CD14-positive monocyte (primary cell): ENCODE measurements at regions of chr22 and their contacts with region 1.

Region 1: GRCh38 chr22:42959576-42960509 is 55.1 kb downstream of the PACSIN2 start:
- DNase-seq: peak; percentile 40 to 69 (median 55)
- H3K4me3 ChIP-seq: peak overlapping the region in 2 of 3 experiments; percentile 27 to 68
- H3K4me3 Mint-ChIP-seq: peak overlapping the region; percentile 63 to 81
- H3K27ac ChIP-seq: peak overlapping the region; percentile 19 to 49
- H3K27ac Mint-ChIP-seq: peak overlapping the region; percentile 77 to 91 (median 82)
- H3K4me1 ChIP-seq: peaks cover 47 to 49% of the 10 kb centered on the region in 2 donors
- H3K4me1 Mint-ChIP-seq: peaks cover 58% of the 10 kb centered on the region
- H3K27me3 ChIP-seq: no peaks in the 10 kb centered on the region
- H3K27me3 Mint-ChIP-seq: peaks cover 0 to 2% (median 0%) of the 10 kb centered on the region in 3 donors
- CTCF ChIP-seq: no peak

Region 2: GRCh38 chr22:42920101-42920820 is 39.6 kb before region 1 on chr22:
- intact Hi-C with region 1: loop called (anchors 5 kb)
- DNase-seq: no peak
- H3K4me3 ChIP-seq: no peak overlapping the region
- H3K4me3 Mint-ChIP-seq: no peak overlapping the region
- H3K27ac ChIP-seq: no peak overlapping the region
- H3K27ac Mint-ChIP-seq: peak overlapping the region in 3 of 7 donors; percentile 43 to 79 (median 50)
- H3K4me1 ChIP-seq: peaks cover 48 to 64% of the 10 kb centered on the region in 2 donors
- H3K4me1 Mint-ChIP-seq: peaks cover 65% of the 10 kb centered on the region
- H3K27me3 ChIP-seq: no peaks in the 10 kb centered on the region
- H3K27me3 Mint-ChIP-seq: peaks cover 0 to 3% (median 0%) of the 10 kb centered on the region in 3 donors
- CTCF ChIP-seq: no peak

Region 3: DNA sequence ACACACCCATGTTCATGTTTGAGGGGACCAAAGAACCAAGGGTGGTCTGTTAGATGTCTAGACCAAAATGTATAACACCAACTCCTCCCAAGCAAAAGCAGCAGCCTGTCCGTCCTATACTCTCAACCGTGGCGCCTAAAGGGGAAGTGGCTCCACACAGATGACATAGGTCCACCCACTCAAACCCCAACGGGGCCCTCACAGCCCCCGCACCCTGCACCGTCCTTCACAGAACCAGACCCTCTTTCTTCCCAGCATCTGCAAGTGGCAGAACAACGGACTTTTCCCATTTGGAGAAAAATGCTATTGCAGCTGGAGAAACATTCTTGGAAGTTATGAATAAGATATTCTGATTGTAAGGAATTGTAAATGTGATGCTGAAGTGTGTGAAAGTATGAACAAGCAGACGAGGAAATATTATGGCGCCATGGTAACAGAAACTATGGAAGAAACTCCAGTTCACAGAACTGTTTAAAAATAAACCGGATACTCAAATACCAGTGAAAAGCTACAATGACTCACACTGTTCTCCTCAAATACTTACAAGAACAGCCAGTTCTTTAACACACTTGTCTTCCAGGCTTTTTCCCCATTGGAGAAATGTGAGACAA is 26.3 kb before region 1 on chr22:
- intact Hi-C with region 1: loop called (anchors 2 to 5 kb)
- DNase-seq: peak; percentile 77 to 94 (median 89)
- H3K4me3 ChIP-seq: peak overlapping the region in 1 of 3 experiments; percentile 57
- H3K4me3 Mint-ChIP-seq: peak overlapping the region; percentile 61 to 82
- H3K27ac ChIP-seq: peak overlapping the region; percentile 93 to 99
- H3K27ac Mint-ChIP-seq: peak overlapping the region; percentile 100
- H3K4me1 ChIP-seq: peaks cover 97 to 99% of the 10 kb centered on the region in 2 donors
- H3K4me1 Mint-ChIP-seq: peaks cover 98% of the 10 kb centered on the region
- H3K27me3 ChIP-seq: no peaks in the 10 kb centered on the region
- H3K27me3 Mint-ChIP-seq: peaks cover 0 to 2% (median 1%) of the 10 kb centered on the region in 3 donors
- CTCF ChIP-seq: no peak

Region 4: DNA sequence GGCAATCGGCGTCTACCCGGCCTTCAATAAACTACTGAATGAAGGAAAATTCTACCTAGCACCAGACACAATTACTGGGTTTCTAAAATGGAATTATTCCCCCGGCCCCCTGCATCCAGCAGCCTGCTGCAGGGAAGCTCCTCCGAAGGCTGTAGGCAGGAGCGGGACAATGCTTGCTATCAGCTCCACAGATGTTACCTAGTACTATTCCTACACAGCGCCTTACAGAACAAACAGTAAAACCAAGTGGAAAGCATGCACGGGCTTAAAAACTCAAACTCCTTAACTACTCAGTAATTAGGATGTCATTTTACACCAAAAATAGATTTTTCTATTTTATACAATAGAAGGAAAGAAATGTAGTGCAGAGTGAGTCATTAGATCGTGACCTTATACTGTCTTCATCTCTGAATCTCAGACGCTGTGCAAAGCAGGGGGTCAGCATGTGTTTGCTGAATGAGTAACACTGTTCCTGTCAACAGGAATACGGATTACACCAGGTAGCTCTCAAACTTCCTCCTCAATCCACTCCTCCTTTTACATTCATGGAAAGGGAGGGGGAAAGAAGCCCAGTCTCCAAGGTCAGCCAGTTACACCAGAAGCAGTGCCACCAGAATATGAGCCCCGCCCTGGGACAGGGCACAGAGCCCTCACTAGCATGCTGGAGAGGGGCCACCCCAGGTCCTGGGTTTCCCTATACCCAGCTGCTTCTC is 19.7 kb before region 1 on chr22:
- intact Hi-C with region 1: loop called in 1 of 2 experiments (anchors 2 kb)
- DNase-seq: peak in 2 of 3 donors; percentile 35 to 37
- H3K4me3 ChIP-seq: no peak overlapping the region
- H3K4me3 Mint-ChIP-seq: no peak overlapping the region
- H3K27ac ChIP-seq: peak overlapping the region in 1 of 2 donors; percentile 30
- H3K27ac Mint-ChIP-seq: peak overlapping the region in 6 of 7 donors; percentile 25 to 84 (median 66)
- H3K4me1 ChIP-seq: peaks cover 56% of the 10 kb centered on the region in 2 donors
- H3K4me1 Mint-ChIP-seq: peaks cover 54% of the 10 kb centered on the region
- H3K27me3 ChIP-seq: no peaks in the 10 kb centered on the region
- H3K27me3 Mint-ChIP-seq: peaks cover 0 to 2% (median 2%) of the 10 kb centered on the region in 3 donors
- CTCF ChIP-seq: no peak

Region 5: DNA sequence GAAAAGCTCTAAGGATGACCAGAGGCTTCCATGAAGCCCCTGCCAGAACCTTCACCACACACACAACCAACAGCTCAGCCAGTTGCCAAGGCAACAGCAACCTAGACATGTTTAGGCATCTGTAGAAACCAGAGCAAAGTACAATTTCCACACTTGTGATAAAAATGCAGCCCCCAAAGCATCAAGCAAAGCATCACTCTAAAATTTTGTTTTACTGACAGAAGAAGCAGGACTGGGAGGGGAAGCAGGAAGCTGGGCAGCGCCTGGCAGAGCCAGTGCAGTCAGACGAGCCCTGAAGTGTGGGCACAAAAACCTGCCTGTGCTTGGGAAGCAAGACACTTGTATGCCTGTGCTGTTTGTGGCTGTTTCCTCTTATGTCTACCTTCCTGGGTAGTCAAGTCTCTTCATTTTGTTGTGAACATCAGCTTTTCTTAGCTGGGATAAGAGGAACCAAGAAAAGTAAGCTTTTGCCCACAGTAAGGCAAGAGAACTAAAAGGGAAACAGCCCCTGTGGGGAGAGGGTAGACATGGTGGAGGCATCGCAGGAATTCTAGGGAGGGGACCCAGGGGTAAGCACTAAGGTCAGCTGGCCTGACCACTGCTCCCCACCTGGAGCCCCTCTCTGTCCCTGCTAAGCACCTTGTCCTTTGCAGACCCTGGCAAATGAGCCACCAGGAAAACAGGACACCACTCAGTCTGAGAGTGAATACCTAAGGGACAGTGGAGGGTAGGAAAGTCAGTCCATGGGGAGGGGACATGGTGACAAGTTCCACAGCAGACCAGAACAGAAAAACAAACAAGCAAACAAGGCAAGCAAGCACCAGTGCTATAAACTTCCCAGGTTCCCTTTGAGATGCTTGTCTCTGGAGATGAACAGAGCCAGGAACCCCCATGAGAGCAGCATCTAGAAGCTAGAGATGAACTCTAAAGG is 41.7 kb after region 1 on chr22:
- intact Hi-C with region 1: loop called in 1 of 2 experiments (anchors 5 kb)
- DNase-seq: peak; percentile 39 to 57 (median 52)
- H3K4me3 ChIP-seq: peak overlapping the region in 1 of 3 experiments; percentile 29
- H3K4me3 Mint-ChIP-seq: peak overlapping the region; percentile 50 to 78
- H3K27ac ChIP-seq: peak overlapping the region; percentile 54 to 67
- H3K27ac Mint-ChIP-seq: peak overlapping the region; percentile 79 to 90 (median 89)
- H3K4me1 ChIP-seq: peaks cover 73 to 87% of the 10 kb centered on the region in 2 donors
- H3K4me1 Mint-ChIP-seq: peaks cover 90% of the 10 kb centered on the region
- H3K27me3 ChIP-seq: no peaks in the 10 kb centered on the region
- H3K27me3 Mint-ChIP-seq: peaks cover 0 to 3% (median 0%) of the 10 kb centered on the region in 3 donors
- CTCF ChIP-seq: no peak